ENCODE measurements at regions of chr1 and their contacts with region 1.

Region 1: GRCh38 chr1:94805912-94806311 is 14.2 kb upstream of the SLC44A3 start:
- DNase-seq: peak; percentile 47
- CTCF ChIP-seq: peak; percentile 97

Region 2: GRCh38 chr1:94463765-94464330 is 342.1 kb before region 1 on chr1:
- CTCF ChIA-PET with region 1: interaction called, 12 read pairs
- POLR2A ChIA-PET with region 1: no interaction called
- DNase-seq: peak; percentile 22
- CTCF ChIP-seq: peak; percentile 60

Region 3: GRCh38 chr1:94486990-94487389 is 318.9 kb before region 1 on chr1:
- CTCF ChIA-PET with region 1: interaction called, 132 read pairs
- POLR2A ChIA-PET with region 1: no interaction called
- DNase-seq: no peak
- CTCF ChIP-seq: no peak

Region 4: DNA sequence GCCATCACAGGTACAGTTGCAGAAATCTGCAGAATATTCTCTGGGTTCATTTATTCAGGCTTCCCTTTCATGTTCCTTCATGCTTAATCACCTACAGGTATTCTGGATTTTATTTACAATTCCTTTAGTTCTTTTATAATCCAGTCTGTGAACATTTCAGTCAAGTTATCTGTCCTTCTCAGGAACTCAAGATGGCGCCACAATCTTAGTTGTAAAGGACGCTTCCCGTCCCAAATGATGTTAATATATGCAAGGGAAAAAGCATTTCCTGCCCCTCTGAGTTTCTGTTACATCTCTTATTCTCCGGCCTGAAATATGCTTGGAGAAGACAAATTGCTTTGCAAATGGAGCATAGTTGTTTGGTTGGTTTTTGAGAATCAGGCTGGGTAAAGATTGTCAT is 283.6 kb before region 1 on chr1:
- CTCF ChIA-PET with region 1: interaction called, 57 read pairs
- POLR2A ChIA-PET with region 1: no interaction called
- DNase-seq: peak; percentile 5
- CTCF ChIP-seq: no peak

Region 5: GRCh38 chr1:94832446-94832845 is 26.5 kb after region 1 on chr1:
- CTCF ChIA-PET with region 1: interaction called, 10 read pairs
- POLR2A ChIA-PET with region 1: no interaction called
- DNase-seq: no peak
- CTCF ChIP-seq: no peak

Measured in GM10248 (cell line).